ENCODE measurements at regions of chr11 and their contacts with region 1.

Region 1: DNA sequence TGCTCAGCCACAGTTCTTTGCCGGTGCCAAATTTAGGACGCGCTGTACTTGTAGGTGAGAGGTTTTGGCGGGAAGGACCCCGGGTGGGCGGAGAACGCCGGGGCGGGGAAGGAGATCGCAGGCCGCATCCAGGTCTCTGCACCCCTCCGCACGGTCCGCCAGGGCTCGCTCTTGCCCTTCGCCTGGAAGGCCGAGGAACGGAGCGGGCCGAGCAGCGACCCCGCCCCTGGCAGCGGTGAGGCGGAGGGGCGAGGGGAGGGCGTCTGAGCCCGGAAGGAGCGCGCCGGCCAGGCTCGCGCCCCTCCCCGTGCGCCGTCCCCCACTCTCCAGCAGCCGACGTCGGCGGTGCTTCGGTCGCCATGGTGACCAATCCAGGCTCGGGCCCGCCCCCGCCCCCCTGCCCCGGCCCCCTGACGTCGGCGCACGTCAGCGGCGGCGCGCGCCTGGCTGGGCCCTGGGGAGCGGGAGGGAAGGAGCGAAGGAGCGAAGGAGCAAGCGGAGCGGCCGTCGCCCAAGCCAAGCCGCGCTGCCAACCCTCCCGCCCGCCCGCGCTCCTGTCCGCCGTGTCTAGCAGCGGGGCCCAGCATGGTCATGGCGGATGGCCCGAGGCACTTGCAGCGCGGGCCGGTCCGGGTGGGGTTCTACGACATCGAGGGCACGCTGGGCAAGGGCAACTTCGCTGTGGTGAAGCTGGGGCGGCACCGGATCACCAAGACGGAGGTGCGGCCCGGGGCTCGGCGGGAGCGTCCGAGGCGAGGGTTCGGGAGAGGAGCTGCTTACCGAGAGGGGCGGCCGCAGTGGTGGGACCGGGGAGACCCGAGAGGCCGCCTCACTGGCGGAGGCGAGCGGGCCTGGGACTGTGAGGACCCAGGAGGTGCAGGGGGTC is at the start of gene SIK2:
- DNase-seq: peak; percentile 84
- H3K4me3 Mint-ChIP-seq: peak within 1 kb of the TSS; percentile 97
- H3K27ac Mint-ChIP-seq: peak within 1 kb of the TSS; percentile 93
- H3K4me1 Mint-ChIP-seq: peaks cover 44% of the 10 kb centered on the region
- H3K27me3 Mint-ChIP-seq: no peaks in the 10 kb centered on the region
- total RNA-seq, gene SIK2: 8.4 and 10.0 TPM in 2 replicates

Region 2: DNA sequence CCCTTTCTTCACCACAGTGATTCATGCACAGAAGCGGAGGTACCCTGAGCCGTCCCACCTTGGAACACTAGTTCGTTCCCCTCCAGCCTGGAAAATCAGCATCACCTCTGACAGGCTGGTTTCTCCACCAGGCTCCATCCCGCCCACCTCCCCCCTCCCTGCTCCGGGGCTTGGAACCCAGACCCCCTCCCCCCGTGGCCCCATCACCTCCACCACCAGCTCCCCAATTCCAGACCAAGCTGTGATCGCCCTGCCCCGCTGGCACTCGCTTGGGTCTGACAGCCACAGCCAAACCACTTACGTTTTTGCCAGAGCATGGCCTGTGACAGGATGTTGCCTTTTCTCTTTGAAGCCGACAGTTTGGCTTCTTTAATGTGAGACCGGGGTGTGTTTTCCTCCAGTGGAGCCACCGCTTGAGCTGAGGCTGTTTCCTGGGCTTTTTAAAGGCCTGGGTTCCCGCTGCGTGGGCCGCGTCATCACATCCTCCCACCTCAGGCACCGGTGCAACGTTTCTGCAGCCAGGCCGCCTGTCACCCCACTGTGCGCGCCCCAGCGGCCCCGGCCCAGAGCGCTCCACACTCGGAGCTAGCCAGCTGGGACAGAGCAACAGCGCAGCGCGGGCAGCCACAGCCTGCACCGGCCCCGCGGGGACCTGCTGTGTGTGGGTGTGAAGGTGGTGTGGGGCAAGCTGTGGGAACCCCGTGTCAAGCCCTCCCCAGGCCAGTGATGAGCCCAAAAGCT is 223.2 kb before region 1 on chr11 and contains the start of gene POU2AF1:
- intact Hi-C with region 1: loop called (anchors 5 kb)
- DNase-seq: peak; percentile 71
- H3K4me3 Mint-ChIP-seq: peak within 1 kb of the TSS; percentile 83
- H3K27ac Mint-ChIP-seq: peak within 1 kb of the TSS; percentile 100
- H3K4me1 Mint-ChIP-seq: peaks cover 81% of the 10 kb centered on the region
- H3K27me3 Mint-ChIP-seq: no peaks in the 10 kb centered on the region
- total RNA-seq, gene POU2AF1: 80.7 and 81.0 TPM in 2 replicates

Region 3: DNA sequence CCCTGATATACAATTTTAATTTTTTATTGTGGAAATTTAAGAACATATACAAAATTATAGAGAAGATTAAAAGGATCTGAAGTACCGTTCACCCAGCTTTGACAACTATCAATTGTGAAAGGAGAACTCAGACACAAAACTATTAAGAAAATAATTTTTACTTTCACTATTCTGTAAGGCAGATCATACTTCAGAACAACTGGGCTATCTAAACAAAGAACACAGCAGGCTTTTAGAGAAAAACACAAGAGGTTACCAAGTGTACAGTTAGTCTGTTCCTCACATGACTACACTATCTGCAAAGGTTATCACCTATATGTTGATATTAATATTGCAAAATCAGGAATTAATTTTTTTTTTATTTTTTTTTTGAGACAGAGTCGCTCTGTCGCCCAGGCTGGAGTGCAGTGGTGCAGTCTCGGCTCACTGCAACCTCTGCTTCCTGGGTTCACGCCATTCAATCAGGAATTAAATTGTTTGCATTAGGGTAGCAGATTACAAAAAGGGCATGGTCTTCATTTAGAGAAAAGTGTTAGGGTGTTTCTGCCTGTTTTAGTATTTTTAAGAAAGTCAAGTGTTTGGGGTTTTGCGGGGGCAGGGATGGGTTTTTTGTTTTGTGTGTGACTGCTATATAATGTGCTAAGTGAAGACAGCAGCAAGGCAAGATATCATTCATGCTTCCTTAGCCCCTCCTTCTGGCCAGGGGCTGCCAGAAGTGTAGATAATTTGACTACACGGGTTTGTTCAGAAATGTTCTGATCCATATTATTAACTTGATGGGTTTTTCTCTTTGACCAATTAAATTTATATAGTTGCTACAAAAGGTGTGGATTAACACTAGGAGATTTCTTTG is 27.6 kb before region 1 on chr11:
- intact Hi-C with region 1: no loop called
- DNase-seq: no peak
- H3K4me3 Mint-ChIP-seq: no peak overlapping the region
- H3K27ac Mint-ChIP-seq: no peak overlapping the region
- H3K4me1 Mint-ChIP-seq: no peaks in the 10 kb centered on the region
- H3K27me3 Mint-ChIP-seq: peaks cover 4% of the 10 kb centered on the region

Region 4: GRCh38 chr11:111586388-111586831 is 15.8 kb before region 1 on chr11:
- intact Hi-C with region 1: loop called (anchors 1 kb)
- DNase-seq: no peak
- H3K4me3 Mint-ChIP-seq: no peak overlapping the region
- H3K27ac Mint-ChIP-seq: no peak overlapping the region
- H3K4me1 Mint-ChIP-seq: no peaks in the 10 kb centered on the region
- H3K27me3 Mint-ChIP-seq: peaks cover 6% of the 10 kb centered on the region

Region 5: DNA sequence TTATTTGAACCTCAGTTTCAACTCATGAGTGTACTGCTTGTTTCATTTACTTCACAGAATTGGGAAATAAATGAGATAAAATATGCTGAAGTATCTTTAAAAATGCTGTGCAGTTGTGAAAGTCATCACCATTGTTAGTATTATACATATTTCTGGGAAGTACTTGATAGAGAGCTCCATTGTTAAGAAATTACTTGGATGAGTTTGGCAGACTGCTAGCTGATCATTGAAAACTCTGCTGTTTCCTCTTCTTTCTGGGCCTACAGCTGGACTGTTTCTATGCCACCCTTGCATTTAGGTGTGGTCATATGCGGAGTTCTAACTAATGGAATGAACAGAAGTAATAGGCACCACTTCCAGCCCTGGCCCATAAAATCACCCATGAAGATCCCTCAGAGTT is 10.0 kb after region 1 on chr11:
- intact Hi-C with region 1: no loop called
- DNase-seq: no peak
- H3K4me3 Mint-ChIP-seq: no peak overlapping the region
- H3K27ac Mint-ChIP-seq: no peak overlapping the region
- H3K4me1 Mint-ChIP-seq: no peaks in the 10 kb centered on the region
- H3K27me3 Mint-ChIP-seq: no peaks in the 10 kb centered on the region

Region 6: DNA sequence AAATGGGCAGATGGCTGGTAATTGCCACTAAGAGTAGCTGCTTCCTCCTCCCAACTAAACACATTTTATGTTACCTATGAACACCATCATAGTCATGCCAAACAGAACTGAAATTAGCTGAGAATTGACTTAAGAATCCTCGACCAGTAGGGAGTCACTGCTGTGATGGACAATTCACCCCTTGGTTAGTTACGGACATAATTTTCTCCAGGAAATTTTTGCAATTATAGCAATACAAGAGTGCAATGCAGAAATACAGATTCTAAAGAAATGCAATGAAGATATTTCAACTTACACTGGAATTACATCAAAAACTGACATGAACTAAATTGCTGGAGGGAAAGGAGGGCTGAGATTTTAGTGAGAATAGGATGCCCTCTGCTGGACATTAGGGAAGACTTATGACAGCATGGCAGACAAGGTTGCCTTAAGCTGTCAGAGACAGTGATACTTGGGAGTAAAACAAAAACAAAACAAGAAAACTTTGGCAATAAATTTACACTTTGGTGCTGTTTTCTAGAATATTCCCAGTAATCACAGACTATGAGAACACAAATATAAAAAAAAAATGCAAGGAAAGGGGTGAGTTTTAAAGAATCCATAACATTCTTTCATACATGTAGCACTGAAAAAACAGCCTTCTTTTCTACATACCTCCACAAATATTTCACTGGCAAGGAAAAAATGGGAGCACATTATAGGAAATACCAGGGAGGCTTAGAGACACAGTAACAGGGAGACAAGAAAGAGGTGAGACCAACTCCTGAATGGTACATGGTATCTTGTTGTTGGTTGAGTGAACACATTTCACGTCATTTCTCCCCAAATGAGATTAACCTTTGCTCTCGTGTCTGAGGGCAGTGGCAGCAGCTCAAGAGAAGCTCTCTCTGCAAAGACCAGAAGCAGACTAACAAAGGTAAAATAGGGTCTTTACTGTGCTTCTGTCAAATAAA is 175.1 kb after region 1 on chr11:
- intact Hi-C with region 1: loop called (anchors 1 kb)
- DNase-seq: peak; percentile 8
- H3K4me3 Mint-ChIP-seq: no peak overlapping the region
- H3K27ac Mint-ChIP-seq: no peak overlapping the region
- H3K4me1 Mint-ChIP-seq: no peaks in the 10 kb centered on the region
- H3K27me3 Mint-ChIP-seq: no peaks in the 10 kb centered on the region

Region 7: GRCh38 chr11:111878849-111879636 is 276.8 kb after region 1 on chr11 and contains the starts of genes CFAP68 and FDXACB1:
- intact Hi-C with region 1: loop called (anchors 2 kb)
- DNase-seq: peak; percentile 92
- H3K4me3 Mint-ChIP-seq: peak within 1 kb of the TSS; percentile 94
- H3K27ac Mint-ChIP-seq: peak within 1 kb of the TSS; percentile 100
- H3K4me1 Mint-ChIP-seq: peaks cover 26% of the 10 kb centered on the region
- H3K27me3 Mint-ChIP-seq: peaks cover 2% of the 10 kb centered on the region
- total RNA-seq, gene CFAP68: 17.7 and 22.3 TPM in 2 replicates
- total RNA-seq, gene FDXACB1: 7.9 and 9.4 TPM in 2 replicates

Region 8: DNA sequence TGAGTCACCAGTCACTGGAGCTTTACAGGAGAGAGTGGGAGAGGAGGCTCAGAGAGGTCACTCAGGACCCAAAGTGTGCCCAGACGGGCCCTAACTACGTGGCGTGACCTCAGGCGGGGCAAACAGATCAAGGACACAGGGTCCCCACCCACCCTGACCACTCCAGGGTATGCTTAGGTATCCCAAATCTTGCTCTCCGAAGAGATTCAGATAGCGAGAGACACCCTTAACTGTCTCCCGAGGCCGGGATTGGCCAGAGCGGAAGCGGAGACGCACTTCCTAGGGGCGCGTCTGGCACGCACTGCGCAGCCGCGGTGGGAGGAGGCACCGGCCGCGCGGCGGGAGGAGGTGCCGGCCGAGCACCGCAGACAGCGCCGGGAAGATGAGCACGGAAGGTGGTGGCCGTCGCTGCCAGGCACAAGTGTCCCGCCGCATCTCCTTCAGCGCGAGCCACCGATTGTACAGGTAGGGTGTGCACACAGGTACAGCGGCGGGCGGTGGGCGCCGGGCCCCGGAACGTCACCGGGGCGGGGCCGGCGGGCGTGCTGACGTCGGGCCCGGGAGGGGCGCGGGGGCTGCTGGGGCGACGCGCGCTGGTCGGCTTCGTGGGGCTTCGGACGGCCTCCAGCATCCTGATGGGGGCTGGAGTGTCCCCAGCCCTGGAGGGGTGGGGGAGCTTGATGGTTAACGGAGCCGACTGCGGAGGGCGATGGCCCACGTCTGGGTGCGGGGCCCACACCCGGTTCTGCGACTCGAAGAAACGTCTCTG is 624.0 kb after region 1 on chr11 and contains the start of gene PTS:
- intact Hi-C with region 1: loop called (anchors 5 kb)
- DNase-seq: peak; percentile 83
- H3K4me3 Mint-ChIP-seq: peak within 1 kb of the TSS; percentile 84
- H3K27ac Mint-ChIP-seq: peak within 1 kb of the TSS; percentile 91
- H3K4me1 Mint-ChIP-seq: peaks cover 29% of the 10 kb centered on the region
- H3K27me3 Mint-ChIP-seq: peaks cover 1% of the 10 kb centered on the region
- total RNA-seq, gene PTS: 28.9 and 35.0 TPM in 2 replicates

Measured in activated T-helper 1 cell treated with anti-CD3 and anti-CD28 coated beads, Interleukin-12 subunit alpha, Interleukin-12 subunit beta, Interleukin-2, Interleukin-4 antibody, amounts not matched to agents 30 ng/mL and 10 ng/mL and 1 ng/mL, durations not matched to agents 14 hours and 24 hours and 36 hours (primary cell).